Naive thymus-derived CD4-positive, alpha-beta T cell (primary cell): ENCODE measurements at regions of chr6 and their contacts with region 1.

Region 1: DNA sequence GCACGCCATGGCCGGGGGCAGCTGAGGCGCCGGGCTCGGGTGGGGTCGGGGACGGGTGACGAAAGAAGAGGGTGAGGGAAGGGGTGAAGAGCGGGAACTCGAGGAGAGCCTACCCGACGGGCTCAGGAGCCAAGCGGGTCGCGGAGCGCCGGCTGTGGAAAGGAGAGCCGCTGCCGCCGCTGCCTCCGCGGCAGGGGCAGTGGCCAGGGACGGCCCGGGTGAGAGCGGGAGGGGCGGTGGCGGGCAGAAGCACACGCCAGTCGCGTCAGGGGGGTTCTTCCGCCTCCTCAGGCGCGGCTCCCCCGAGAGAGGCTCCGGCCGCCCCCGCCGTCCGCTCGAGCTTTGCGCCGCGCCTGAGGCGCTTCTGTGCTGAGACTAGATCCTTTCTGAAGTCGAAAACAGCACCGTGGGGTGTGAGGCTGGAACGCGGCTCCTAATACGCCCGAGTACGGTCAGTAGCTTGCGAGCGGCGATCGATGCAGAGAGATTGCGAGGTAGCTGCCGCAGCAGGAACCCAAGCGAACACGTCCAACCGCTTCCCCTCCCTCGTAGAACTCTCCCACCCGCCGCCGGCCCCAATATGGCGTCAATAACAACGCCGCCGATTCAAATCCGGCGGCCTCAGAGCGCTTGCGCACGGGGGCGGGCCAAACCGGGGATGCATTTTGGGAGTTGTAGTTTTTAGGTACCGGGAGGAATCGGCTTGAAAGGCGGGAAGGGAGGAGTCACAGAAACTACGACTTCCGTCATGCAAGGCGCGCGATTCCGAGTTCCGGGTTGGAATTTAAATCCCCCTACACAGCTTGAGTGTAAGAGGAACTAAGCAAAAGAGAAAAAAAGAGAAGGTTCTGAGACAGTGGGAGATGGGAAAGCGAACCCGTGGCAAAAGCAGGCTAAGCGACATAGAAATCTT is at the start of gene AKIRIN2:
- DNase-seq: peak; percentile 96 to 99 (median 98)
- ATAC-seq: peak; percentile 90
- H3K4me3 ChIP-seq: peak within 1 kb of the TSS; percentile 80
- H3K4me3 Mint-ChIP-seq: peak within 1 kb of the TSS; percentile 92 to 98 (median 96)
- H3K27ac ChIP-seq: peak within 1 kb of the TSS; percentile 93
- H3K27ac Mint-ChIP-seq: peak within 1 kb of the TSS; percentile 89 to 97 (median 94)
- H3K4me1 ChIP-seq: peaks cover 6 to 13% of the 10 kb centered on the region in 2 donors
- H3K4me1 Mint-ChIP-seq: peaks cover 22 to 43% (median 40%) of the 10 kb centered on the region in 7 donors
- H3K27me3 ChIP-seq: no peaks in the 10 kb centered on the region
- H3K27me3 Mint-ChIP-seq: no peaks in the 10 kb centered on the region
- total RNA-seq, gene AKIRIN2: 36.0 to 197 (median 57.4) TPM

Region 2: GRCh38 chr6:87407901-87408720 is 293.8 kb before region 1 on chr6 and contains the start of gene CFAP206:
- CTCF ChIA-PET with region 1: no interaction called
- POLR2A ChIA-PET with region 1: no interaction called
- intact Hi-C with region 1: loop called (anchors 2 to 5 kb)
- DNase-seq: peak; percentile 75 to 87 (median 81)
- ATAC-seq: peak; percentile 91
- H3K4me3 ChIP-seq: peak within 1 kb of the TSS; percentile 98
- H3K4me3 Mint-ChIP-seq: peak within 1 kb of the TSS; percentile 76 to 94 (median 88)
- H3K27ac ChIP-seq: peak within 1 kb of the TSS; percentile 75
- H3K27ac Mint-ChIP-seq: peak within 1 kb of the TSS in 8 of 9 donors; percentile 21 to 91 (median 70)
- H3K4me1 ChIP-seq: peaks cover 0 to 5% of the 10 kb centered on the region in 2 donors
- H3K4me1 Mint-ChIP-seq: peaks cover 0 to 7% (median 5%) of the 10 kb centered on the region in 7 donors
- H3K27me3 ChIP-seq: no peaks in the 10 kb centered on the region
- H3K27me3 Mint-ChIP-seq: peaks cover 18 to 47% (median 23%) of the 10 kb centered on the region in 5 donors
- total RNA-seq, gene CFAP206: not detected

Region 3: GRCh38 chr6:87656857-87657256 is 45.1 kb before region 1 on chr6:
- CTCF ChIA-PET with region 1: interaction called, 5 read pairs
- POLR2A ChIA-PET with region 1: interaction called, 10 read pairs
- intact Hi-C with region 1: loop called (anchors 1 to 2 kb)
- DNase-seq: peak in 6 of 9 donors; percentile 14 to 49 (median 34)
- ATAC-seq: peak; percentile 54
- H3K4me3 ChIP-seq: no peak overlapping the region
- H3K4me3 Mint-ChIP-seq: peak overlapping the region in 8 of 10 donors; percentile 14 to 51 (median 38)
- H3K27ac ChIP-seq: no peak overlapping the region
- H3K27ac Mint-ChIP-seq: peak overlapping the region; percentile 37 to 83 (median 50)
- H3K4me1 ChIP-seq: peaks cover 0 to 20% of the 10 kb centered on the region in 2 donors
- H3K4me1 Mint-ChIP-seq: peaks cover 13 to 41% (median 33%) of the 10 kb centered on the region in 7 donors
- H3K27me3 ChIP-seq: no peaks in the 10 kb centered on the region
- H3K27me3 Mint-ChIP-seq: no peaks in the 10 kb centered on the region

Region 4: DNA sequence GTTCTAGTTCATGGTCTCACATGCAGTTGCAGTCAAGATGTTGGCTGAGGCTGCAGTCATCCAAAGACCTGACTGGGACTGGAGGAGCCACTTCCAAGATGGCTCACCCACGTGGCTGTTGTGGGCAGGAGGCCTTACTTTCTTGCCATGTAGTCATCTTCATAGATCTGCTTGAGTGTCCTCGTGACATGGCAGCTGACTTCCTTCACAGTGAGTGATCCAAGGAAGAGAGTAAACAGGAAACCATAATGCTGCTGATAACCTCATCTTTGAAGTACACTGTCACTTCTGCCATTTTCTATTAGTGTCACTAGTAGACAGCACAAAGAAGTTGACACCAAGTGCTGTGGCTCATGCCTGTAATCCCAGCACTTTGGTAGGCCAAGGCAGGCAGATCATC is 40.2 kb after region 1 on chr6:
- CTCF ChIA-PET with region 1: no interaction called
- POLR2A ChIA-PET with region 1: interaction called, 3 read pairs
- intact Hi-C with region 1: loop called (anchors 1 to 2 kb)
- DNase-seq: peak in 8 of 9 donors; percentile 16 to 63 (median 42)
- ATAC-seq: peak; percentile 93
- H3K4me3 ChIP-seq: no peak overlapping the region
- H3K4me3 Mint-ChIP-seq: peak overlapping the region in 3 of 10 donors; percentile 5 to 43 (median 32)
- H3K27ac ChIP-seq: no peak overlapping the region
- H3K27ac Mint-ChIP-seq: peak overlapping the region in 6 of 9 donors; percentile 1 to 88 (median 34)
- H3K4me1 ChIP-seq: peaks cover 0 to 28% of the 10 kb centered on the region in 2 donors
- H3K4me1 Mint-ChIP-seq: peaks cover 13 to 32% (median 18%) of the 10 kb centered on the region in 7 donors
- H3K27me3 ChIP-seq: no peaks in the 10 kb centered on the region
- H3K27me3 Mint-ChIP-seq: peaks cover 0 to 8% (median 0%) of the 10 kb centered on the region in 5 donors

Region 5: DNA sequence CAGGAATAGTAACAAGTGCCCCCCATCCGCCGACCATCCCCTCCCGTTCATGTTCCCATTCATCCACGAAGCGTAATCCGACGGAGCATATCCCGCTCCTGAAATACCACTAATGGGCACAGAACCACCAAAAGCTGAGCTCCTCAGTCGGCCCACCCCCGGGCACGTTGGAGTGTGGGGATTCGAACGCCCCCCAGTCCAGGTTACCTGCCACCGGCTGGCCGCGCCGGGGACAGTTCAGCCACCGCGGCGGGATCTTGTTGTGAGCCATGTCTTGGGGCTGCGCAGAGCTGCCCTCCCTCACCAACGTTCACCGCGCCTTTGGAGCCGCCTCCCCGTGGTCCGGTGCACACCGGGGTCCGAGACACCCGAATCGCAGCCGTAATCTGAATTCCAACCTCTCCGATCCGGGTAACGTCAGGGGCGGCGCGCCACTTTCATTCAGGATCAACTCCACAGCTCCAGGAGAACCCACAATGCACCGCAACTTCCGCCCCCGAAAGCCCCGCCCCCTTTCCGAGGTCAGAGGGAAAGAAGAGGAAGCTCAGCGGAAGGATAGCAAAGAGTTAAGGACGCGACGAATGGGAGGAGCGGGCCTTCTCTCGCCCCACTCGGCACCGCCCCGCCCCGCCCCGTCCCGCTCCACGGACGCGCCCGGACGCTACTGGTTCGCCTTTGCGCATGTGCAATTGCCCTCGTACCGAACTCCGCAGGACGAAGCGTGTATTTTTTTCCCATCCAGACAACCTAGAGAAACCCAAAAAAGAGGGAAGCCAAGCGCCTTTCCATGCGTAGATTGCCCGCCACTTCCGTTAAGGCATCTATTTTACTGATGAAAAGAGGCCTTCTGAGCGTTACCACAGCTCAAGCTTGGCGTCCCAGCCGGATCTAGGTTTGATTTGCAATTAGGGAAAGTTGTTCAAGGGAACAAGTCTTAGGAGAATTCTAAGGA is 1261.5 kb after region 1 on chr6 and contains the start of gene RNGTT:
- CTCF ChIA-PET with region 1: no interaction called
- POLR2A ChIA-PET with region 1: interaction called, 4 read pairs
- intact Hi-C with region 1: loop called (anchors 1 to 2 kb)
- DNase-seq: peak; percentile 89 to 98 (median 95)
- ATAC-seq: peak; percentile 100
- H3K4me3 ChIP-seq: peak within 1 kb of the TSS; percentile 82
- H3K4me3 Mint-ChIP-seq: peak within 1 kb of the TSS; percentile 91 to 99 (median 98)
- H3K27ac ChIP-seq: peak within 1 kb of the TSS; percentile 82
- H3K27ac Mint-ChIP-seq: peak within 1 kb of the TSS; percentile 85 to 97 (median 94)
- H3K4me1 ChIP-seq: peaks cover 9 to 18% of the 10 kb centered on the region in 2 donors
- H3K4me1 Mint-ChIP-seq: peaks cover 25 to 57% (median 52%) of the 10 kb centered on the region in 7 donors
- H3K27me3 ChIP-seq: no peaks in the 10 kb centered on the region
- H3K27me3 Mint-ChIP-seq: peaks cover 0 to 2% (median 0%) of the 10 kb centered on the region in 5 donors
- total RNA-seq, gene RNGTT: 15.4 to 26.5 (median 20.8) TPM